H1 (cell line): ENCODE measurements at regions of chr13 and their contacts with region 1.

Region 1: GRCh38 chr13:81171065-81171647 is 830.2 kb upstream of the SPRY2 start:
- DNase-seq: no peak
- H3K4me3 ChIP-seq: no peak overlapping the region
- H3K27ac ChIP-seq: no peak overlapping the region
- H3K4me1 ChIP-seq: no peaks in the 10 kb centered on the region; a peak in 1 of 7 replicates
- H3K27me3 ChIP-seq: no peaks in the 10 kb centered on the region
- CTCF ChIP-seq: peak in 2 of 3 experiments; percentile 30 to 54; a peak in 2 of 4 replicates
- EP300 ChIP-seq: no peak
- POLR2A ChIP-seq: no peak
- RAD21 ChIP-seq: peak; percentile 68 to 70

Region 2: GRCh38 chr13:81184556-81185265 is 13.6 kb after region 1 on chr13:
- CTCF ChIA-PET with region 1: interaction called, 13 read pairs
- POLR2A ChIA-PET with region 1: no interaction called
- DNase-seq: no peak
- H3K4me3 ChIP-seq: no peak overlapping the region
- H3K27ac ChIP-seq: no peak overlapping the region
- H3K4me1 ChIP-seq: no peaks in the 10 kb centered on the region
- H3K27me3 ChIP-seq: no peaks in the 10 kb centered on the region
- CTCF ChIP-seq: no peak
- EP300 ChIP-seq: no peak
- POLR2A ChIP-seq: no peak
- RAD21 ChIP-seq: no peak

Region 3: GRCh38 chr13:81480634-81481033 is 309.5 kb after region 1 on chr13:
- CTCF ChIA-PET with region 1: interaction called, 11 read pairs
- POLR2A ChIA-PET with region 1: no interaction called
- DNase-seq: no peak
- H3K4me3 ChIP-seq: no peak overlapping the region
- H3K27ac ChIP-seq: no peak overlapping the region
- H3K4me1 ChIP-seq: no peaks in the 10 kb centered on the region
- H3K27me3 ChIP-seq: no peaks in the 10 kb centered on the region
- CTCF ChIP-seq: no peak
- EP300 ChIP-seq: no peak
- POLR2A ChIP-seq: no peak
- RAD21 ChIP-seq: peak; percentile 25 to 35; a peak in 3 of 4 replicates

Region 4: DNA sequence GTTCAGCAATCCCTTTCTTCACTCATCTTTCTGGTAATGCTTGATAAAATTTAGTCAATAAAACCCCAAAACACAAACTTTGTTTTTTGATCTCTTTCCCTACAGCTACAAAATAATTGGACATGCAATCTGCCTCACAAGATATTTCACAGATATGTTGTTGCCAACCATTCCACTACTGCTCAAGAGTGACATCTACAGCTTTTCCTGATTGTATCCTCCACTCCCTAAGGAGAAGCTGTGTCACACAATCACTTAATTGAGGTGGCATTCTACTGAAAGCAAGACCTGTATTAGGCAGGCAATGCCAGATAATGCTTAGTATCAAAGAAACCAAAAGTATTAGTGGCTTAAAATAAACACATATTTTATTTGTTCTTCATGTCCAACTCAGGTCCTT is 816.0 kb after region 1 on chr13:
- CTCF ChIA-PET with region 1: interaction called, 10 read pairs
- POLR2A ChIA-PET with region 1: no interaction called
- DNase-seq: no peak
- H3K4me3 ChIP-seq: peak overlapping the region in 1 of 4 experiments; percentile 25; a peak in 1 of 8 replicates
- H3K27ac ChIP-seq: no peak overlapping the region
- H3K4me1 ChIP-seq: peaks cover 0 to 21% (median 10%) of the 10 kb centered on the region in 4 experiments; a peak in 3 of 7 replicates
- H3K27me3 ChIP-seq: peaks cover 0 to 5% (median 2%) of the 10 kb centered on the region in 4 experiments; a peak in 4 of 7 replicates
- CTCF ChIP-seq: peak in 1 of 3 experiments; percentile 38; a peak in 2 of 4 replicates
- EP300 ChIP-seq: no peak
- POLR2A ChIP-seq: no peak
- RAD21 ChIP-seq: peak; percentile 60 to 62